Cardiac septum (tissue), 1 donor: ENCODE measurements at regions of chr6 and their contacts with region 1.

Region 1: DNA sequence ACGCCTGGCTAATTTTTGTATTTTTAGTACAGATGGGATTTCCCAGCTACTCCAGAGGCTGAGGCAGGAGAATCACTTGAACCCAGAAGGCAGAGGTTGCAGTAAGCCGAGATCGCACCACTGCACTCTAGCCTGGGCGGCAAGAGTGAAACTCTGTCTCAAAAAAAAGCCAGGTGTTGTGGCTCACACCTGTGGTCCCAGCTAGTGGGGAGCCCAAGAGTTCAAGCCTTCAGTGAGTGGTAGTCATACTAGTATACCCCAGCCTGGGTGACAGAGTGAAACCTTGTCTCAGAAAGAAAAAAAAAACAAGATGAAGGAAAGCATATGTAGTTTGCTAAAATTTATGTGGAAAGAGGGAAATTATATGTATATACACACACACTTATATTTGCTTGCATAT is 20.0 kb upstream of the POU5F1 start:
- DNase-seq: no peak

Region 2: DNA sequence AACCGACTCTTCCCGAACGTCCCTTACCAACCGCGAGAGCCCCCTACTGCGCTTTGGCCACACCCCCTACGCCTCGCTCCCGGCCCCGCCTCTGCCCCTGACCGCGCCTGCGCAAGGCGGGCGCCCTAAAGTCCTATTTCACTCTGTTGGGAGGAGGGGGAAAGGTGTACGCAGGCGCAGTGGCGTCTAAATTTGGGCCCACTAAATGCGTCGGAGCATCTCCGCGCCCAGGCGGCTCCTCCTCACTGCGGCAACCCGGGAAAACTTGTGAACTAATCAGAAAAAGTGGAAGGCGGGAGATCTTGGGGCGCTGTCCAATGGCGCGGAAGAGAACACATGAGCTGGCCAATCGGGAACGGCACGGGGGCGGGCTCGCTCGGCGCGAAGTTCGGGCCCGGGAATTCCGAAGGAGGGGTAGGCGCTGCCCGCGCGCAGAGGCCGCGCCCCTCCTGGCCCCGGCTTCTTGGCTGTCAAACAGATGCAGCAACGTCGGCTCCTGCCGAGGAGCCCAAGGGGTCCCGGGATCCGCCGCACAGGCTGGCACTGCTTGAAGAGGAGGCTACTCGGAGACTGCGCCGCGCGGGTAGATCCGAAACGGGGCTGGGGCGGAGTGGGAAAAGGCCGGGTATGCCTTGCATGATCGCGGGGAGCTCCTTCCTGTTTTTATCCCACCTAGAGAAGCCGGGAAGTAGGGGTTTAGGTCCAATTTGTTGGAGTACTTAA is 32.2 kb before region 1 on chr6 and contains the start of gene TCF19:
- intact Hi-C with region 1: loop called (anchors 2 kb)
- DNase-seq: peak; percentile 100
- total RNA-seq, gene TCF19: 2.4 TPM

Region 3: DNA sequence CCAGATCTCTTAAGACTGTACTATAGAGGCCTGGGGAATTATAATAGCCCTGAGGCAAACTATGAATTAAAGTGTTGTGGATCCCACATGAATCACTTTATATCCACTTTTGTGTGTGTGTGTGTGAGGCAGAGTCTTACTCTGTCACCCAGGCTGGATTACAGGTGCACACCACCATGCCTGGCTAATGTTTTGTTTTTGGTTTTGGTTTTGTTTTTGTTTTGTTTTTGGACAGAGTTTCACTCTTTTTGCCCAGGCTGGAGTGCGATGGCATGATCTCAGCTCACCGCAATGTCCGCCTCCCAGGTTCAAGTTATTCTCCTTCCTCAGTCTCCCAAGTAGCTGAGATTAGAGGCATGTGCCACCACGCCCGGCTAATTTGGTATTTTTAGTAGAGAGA is 275.2 kb after region 1 on chr6:
- intact Hi-C with region 1: no loop called
- DNase-seq: no peak